ENCODE measurements at regions of chr3 and their contacts with region 1.

Region 1: GRCh38 chr3:67860429-67860828 is 206.0 kb upstream of the SUCLG2 start:
- DNase-seq: no peak
- CTCF ChIP-seq: no peak

Region 2: DNA sequence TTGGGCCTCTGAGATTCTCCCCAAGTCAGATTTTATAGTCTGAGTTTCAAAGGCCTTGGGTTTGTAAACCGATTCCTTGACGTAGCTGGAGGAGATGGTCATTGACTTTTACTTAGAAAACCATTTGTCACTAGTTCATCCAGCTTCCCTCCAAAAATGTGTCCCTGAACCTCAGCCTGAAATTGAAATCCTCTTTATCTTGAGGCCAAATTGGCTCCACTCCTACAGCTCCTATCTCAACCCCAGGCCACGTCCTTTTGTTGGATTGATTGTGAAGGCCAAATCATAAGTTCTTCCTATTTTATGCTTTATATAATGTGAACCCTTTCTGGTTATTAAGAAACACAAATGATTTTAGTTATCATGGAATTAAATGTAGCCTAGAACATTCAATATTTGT is 12.1 kb before region 1 on chr3:
- CTCF ChIA-PET with region 1: interaction called, 10 read pairs
- POLR2A ChIA-PET with region 1: no interaction called
- DNase-seq: no peak
- CTCF ChIP-seq: no peak

Region 3: GRCh38 chr3:67870477-67870876 is 10.0 kb after region 1 on chr3:
- CTCF ChIA-PET with region 1: no interaction called
- POLR2A ChIA-PET with region 1: no interaction called
- DNase-seq: no peak
- CTCF ChIP-seq: no peak

Region 4: DNA sequence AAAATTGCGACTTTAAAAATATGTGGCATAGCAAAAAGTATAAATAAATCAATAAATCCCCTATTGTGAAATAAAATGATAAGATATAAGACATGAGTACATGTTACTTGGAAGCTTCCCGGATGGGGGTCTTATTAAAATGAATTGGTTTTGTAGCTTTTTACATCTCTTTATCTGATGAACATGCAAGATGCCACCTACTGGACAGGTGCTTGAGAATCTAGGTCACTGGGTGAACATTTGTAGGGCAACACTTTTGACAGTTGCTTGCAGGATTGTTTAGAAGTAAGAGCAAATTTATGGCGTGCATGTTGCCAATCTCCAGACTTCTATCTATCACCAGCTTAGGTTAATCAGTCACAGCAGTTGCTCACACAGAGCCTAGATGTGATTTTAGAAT is 156.6 kb after region 1 on chr3:
- CTCF ChIA-PET with region 1: no interaction called
- POLR2A ChIA-PET with region 1: no interaction called
- DNase-seq: no peak
- CTCF ChIP-seq: no peak

Measured in GM10248 (cell line).